Right ventricle myocardium superior (tissue), 1 donor: ENCODE measurements at regions of chr14 and their contacts with region 1.

Region 1: DNA sequence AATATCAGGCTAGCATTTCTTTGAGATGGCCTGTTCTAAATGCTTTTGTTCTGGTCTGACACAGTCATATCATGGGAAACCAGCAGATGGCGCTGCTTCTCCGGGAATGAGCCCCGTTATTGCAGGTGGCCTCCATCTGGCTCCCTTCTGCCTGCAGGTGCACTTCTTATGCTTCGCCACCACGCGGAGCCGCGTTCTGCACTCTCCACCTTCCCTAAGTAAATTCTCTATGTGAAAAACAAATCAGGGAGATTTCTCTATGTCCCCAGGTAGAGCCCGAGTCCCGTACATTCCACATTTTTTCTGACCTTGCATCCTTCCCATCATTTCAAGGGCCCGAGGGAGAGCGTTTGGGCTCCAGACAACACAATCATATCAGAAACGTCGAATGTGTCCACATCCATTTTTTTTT is 26.2 kb downstream of the GLRX5 start:
- DNase-seq: peak; percentile 85
- ATAC-seq: peak; percentile 92

Region 2: DNA sequence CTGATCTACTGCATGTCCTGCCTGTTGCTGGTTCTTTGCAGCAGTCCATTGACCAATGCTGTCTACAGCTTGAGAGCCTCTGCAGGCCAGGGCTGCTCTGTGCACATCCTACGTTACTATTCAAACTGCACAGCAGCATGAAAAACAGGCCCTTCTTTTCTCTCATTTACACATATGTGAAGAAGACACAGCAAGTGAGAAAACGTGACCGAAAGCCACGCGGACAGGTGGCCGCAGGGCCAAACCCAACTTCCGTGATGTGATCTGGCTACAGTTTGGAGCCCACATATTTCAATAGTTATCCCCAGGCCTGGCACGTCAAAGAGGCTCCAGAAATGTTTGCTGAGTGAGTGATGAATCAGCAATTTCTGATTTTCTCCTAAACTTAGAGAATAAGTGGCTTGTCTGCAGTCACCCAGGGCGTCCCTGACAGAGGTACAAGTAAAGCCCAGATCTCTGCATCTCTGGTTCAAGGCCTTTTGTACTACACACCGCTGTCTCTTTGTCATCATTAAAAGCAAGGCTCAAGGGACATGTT is 107.3 kb after region 1 on chr14:
- intact Hi-C with region 1: no loop called
- DNase-seq: no peak
- ATAC-seq: no peak

Region 3: GRCh38 chr14:95683793-95684192 is 122.8 kb after region 1 on chr14:
- intact Hi-C with region 1: loop called (anchors 10 kb)
- DNase-seq: no peak
- ATAC-seq: no peak

Region 4: DNA sequence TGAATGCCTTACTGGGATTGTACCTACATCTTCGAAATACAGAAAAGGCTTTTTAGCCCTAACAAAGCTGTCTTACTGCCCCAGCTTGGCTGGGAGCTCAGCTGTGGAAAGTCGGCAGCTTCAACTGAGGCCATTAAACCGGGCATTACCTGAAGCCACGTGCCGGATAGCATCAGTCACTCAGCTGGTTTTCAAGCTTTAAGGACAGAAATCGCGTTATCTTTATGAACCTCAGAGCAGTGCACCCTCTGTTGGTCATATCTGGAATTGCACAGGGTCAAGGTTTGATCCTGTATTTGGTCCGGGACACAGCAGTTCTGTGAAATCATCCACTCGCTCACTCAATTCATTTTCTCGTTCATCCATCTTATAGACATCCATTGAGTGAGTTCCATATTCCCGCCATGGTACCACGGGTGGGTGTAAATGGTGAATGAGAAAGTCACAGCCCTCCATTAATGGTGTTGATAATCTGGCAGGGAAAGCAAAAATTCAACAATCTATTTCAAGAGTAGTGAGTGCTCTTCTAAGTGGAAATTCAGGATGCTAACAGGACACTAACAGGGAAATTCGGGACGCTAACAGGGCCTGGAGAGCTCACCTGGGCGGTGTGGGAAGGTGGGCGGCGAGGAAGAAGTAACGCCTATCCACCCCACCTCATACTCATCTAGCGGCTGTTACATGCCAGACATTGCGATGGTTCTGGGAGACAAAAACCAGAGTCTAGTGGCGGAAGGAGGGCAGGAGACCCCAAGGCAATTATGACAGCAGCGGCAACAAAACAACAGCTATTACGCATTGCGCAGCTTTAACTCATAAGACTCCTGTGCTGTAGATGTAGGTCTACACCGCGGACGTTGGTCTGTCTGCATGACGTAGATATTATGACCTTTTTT is 213.5 kb after region 1 on chr14:
- intact Hi-C with region 1: loop called (anchors 5 kb)
- DNase-seq: no peak
- ATAC-seq: no peak

Region 5: GRCh38 chr14:95935228-95935822 is 374.3 kb after region 1 on chr14:
- intact Hi-C with region 1: no loop called
- DNase-seq: no peak
- ATAC-seq: no peak

Region 6: DNA sequence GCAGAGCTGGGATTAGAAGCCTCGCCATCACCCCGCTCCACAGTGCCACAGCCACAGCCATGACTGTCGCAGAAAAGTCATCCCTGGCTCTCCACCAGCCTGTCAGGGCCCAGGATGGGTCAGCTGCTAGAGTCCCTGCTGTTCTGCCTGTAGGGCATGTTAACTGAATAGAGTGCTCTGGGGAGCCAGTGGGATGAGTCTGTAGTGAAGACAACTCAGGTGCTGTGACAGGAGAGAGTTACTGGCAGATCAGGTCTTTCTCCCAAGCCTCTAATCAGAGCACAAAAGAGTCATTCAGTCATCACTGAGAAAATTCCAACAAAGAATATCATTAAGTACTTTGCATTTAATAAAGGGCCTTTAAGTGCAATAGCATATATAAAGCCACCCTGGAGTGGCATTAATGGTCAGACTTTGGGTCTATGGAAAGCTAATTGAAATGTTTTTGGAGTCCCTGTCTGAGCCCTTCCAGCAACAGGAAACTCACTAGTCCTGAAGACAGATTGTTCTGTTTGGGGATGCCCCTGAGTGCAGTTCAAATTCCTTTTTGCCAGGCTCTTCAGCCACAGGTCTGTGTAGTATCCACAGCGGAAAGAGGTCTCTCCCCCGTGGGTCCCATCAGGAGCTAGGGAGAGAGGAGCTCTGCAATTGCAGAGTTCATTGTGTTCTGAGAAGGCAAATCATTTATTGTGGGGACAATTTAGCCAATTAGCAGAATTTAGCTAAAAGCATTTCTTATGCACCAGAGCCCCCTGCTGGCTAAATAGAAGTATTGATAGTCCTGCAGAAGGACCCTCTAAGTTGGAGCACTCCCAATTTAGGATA is 433.0 kb after region 1 on chr14:
- intact Hi-C with region 1: loop called (anchors 2 kb)
- DNase-seq: no peak
- ATAC-seq: peak; percentile 38

Region 7: GRCh38 chr14:96275177-96276112 is 714.4 kb after region 1 on chr14:
- intact Hi-C with region 1: loop called (anchors 10 kb)
- DNase-seq: peak; percentile 81
- ATAC-seq: peak; percentile 85